SK-N-SH (cell line): ENCODE measurements at regions of chr11 and their contacts with region 1.

Region 1: DNA sequence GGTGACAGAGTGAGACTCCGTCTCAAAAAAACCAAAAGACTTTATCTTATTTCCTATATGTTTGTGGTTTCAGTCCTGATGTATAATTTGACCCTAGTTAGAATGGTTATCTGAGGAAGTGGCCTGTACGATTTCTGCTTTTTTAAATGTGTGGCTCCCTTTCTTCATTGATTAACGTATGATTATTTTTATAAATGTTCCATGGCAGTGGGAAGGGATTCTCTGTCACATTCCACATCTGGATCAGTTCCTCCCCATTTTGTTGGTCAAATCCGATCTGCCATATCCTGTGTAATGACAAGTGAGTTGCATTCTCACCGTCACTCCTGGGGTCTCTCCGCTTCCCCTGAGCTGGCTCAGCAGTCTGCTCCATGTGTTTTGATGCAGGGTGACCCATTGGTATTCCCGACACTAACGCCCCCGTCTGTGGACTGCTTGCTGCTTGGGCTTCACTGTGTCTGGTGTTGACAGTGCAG is 20.3 kb downstream of the NEAT1 start:
- DNase-seq: no peak
- H3K4me3 ChIP-seq: no peak overlapping the region
- H3K27ac ChIP-seq: peak overlapping the region; percentile 53 to 100
- H3K4me1 ChIP-seq: peaks cover 0 to 19% of the 10 kb centered on the region in 2 experiments; a peak in 2 of 4 replicates
- H3K27me3 ChIP-seq: no peaks in the 10 kb centered on the region
- CTCF ChIP-seq: no peak
- EP300 ChIP-seq: no peak
- RAD21 ChIP-seq: no peak

Region 2: DNA sequence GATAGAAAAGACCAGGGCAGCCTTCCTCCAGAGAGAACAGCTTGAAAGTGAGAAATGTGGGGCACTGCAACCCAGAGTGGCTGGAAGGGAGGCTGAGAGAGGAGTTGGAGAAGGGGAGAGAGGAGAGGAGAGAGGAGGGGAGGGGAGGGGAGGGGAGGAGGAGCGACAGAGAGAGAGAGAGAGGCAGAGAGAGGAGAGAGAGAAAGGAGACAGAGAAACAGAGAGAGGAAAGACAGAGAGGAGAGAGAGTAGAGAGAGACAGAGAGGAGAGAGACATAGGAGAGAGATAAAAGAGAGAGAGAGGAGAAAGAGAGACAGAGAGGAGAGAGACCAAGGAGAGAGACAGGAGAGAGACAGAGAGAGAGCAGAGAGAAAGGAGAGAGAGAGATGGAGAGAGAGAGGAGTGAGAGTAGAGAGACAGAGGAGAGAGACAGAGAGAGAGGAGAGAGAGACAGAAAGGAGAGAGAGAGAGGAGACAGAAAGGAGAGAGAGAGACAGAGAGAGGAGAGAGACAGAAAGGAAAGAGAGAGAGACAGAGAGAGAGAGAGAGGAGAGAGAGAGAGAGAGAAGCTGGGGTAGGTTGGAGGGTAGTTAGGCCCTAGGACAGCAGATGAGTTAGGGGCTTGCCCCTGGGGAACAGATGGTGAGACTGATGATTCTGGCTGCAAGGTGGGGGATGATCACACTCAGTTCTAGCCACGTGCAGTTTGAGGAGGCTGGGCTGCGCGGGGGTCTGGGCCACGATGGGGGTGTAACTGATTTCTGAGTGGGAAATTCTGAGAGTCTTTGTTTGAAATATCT is 73.4 kb after region 1 on chr11:
- CTCF ChIA-PET with region 1: no interaction called
- POLR2A ChIA-PET with region 1: interaction called, 10 read pairs
- DNase-seq: no peak
- H3K4me3 ChIP-seq: no peak overlapping the region
- H3K27ac ChIP-seq: no peak overlapping the region
- H3K4me1 ChIP-seq: no peaks in the 10 kb centered on the region
- H3K27me3 ChIP-seq: no peaks in the 10 kb centered on the region
- CTCF ChIP-seq: no peak
- EP300 ChIP-seq: no peak
- RAD21 ChIP-seq: no peak